ENCODE measurements at regions of chr5 and their contacts with region 1.

Region 1: GRCh38 chr5:157148734-157149615 is 6.3 kb upstream of the MED7 start:
- DNase-seq: peak; percentile 52 to 93 (median 76)
- ATAC-seq: peak; percentile 70 to 85 (median 78)
- H3K4me3 ChIP-seq: no peak overlapping the region
- H3K4me3 Mint-ChIP-seq: peak overlapping the region in 1 of 3 donors; percentile 29
- H3K27ac ChIP-seq: no peak overlapping the region
- H3K27ac Mint-ChIP-seq: peak overlapping the region; percentile 81 to 90
- H3K4me1 ChIP-seq: peaks cover 12 to 25% of the 10 kb centered on the region in 2 experiments
- H3K4me1 Mint-ChIP-seq: peaks cover 41 to 47% (median 46%) of the 10 kb centered on the region in 3 donors
- H3K27me3 ChIP-seq: no peaks in the 10 kb centered on the region
- H3K27me3 Mint-ChIP-seq: no peaks in the 10 kb centered on the region

Region 2: DNA sequence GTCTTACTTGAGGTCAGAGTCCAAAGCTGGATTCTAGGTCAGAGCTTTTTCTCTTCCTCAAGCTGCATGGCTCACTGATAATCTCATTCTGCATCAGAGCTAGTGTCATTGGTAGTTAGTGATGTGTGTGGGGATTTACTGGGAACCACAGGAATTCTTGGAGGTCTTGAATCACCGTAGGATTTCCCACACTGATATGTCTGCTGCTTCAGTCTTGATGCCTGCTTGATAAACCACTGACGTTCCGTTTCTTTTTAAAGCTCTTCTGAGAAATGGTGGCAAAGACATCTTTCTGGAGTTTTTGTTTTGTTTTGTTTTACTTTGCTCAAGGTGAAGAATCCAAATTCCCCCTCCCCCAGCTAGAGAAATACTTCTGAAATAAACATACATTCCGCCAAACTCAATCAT is 18.2 kb after region 1 on chr5:
- CTCF ChIA-PET with region 1: interaction called, 6 to 15 read pairs
- POLR2A ChIA-PET with region 1: interaction called, 3 to 4 read pairs
- DNase-seq: no peak
- ATAC-seq: peak; percentile 31 to 58 (median 44)
- H3K4me3 ChIP-seq: no peak overlapping the region
- H3K4me3 Mint-ChIP-seq: peak overlapping the region; percentile 40 to 70 (median 42)
- H3K27ac ChIP-seq: peak overlapping the region; percentile 56
- H3K27ac Mint-ChIP-seq: peak overlapping the region; percentile 92
- H3K4me1 ChIP-seq: peaks cover 17 to 30% of the 10 kb centered on the region in 2 experiments
- H3K4me1 Mint-ChIP-seq: peaks cover 55 to 75% (median 70%) of the 10 kb centered on the region in 3 donors
- H3K27me3 ChIP-seq: no peaks in the 10 kb centered on the region
- H3K27me3 Mint-ChIP-seq: no peaks in the 10 kb centered on the region

Region 3: DNA sequence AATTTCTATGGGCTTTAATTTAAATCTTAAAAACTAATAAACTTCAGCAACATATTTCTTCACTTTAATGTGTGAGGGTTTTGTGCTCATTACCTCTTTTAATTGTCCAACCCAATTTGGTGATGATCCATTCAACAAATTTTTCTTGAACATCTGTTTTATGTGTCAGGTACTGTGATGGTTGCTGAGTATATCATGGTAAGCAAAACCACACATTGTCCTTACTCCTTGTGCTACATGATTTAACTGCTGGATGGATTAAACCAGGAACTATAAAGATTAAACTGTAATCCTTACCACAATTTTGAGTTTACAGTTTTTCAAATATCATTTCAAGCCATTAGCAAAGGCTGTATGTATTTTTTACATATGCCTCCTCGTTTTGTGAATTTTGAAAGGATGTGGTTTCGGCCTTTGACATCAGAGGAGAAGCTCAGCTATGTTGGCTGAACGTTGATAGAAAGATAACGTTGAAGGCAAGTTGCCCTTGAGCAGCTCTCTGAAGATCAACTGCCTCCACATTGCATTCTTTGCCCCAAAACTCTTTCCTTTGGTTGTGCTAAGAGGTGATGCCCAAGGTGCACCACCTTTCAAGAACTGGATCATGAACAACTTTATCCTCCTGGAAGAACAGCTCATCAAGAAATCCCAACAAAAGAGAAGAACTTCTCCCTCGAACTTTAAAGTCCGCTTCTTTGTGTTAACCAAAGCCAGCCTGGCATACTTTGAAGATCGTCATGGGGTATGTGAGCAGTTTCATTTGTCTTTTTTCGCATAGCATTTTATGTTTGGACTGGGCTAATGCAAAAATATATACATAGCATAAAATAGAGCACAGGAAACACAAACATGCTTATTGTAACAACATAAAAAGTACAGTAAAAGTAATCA is 31.6 kb after region 1 on chr5 and contains the start of gene ITK:
- CTCF ChIA-PET with region 1: interaction called, 3 to 12 read pairs
- POLR2A ChIA-PET with region 1: interaction called in 1 of 2 experiments, 5 read pairs
- DNase-seq: peak in 29 of 35 experiments; percentile 11 to 86 (median 51)
- ATAC-seq: peak; percentile 86 to 89 (median 86)
- H3K4me3 ChIP-seq: peak within 1 kb of the TSS; percentile 79 to 91
- H3K4me3 Mint-ChIP-seq: peak within 1 kb of the TSS; percentile 81 to 100 (median 99)
- H3K27ac ChIP-seq: peak within 1 kb of the TSS; percentile 88
- H3K27ac Mint-ChIP-seq: peak within 1 kb of the TSS; percentile 99 to 100
- H3K4me1 ChIP-seq: peaks cover 30 to 37% of the 10 kb centered on the region in 2 experiments
- H3K4me1 Mint-ChIP-seq: peaks cover 48 to 56% (median 56%) of the 10 kb centered on the region in 3 donors
- H3K27me3 ChIP-seq: no peaks in the 10 kb centered on the region
- H3K27me3 Mint-ChIP-seq: no peaks in the 10 kb centered on the region
- total RNA-seq, gene ITK: 286 to 466 (median 338) TPM

Region 4: GRCh38 chr5:157253547-157253946 is 104.6 kb after region 1 on chr5:
- CTCF ChIA-PET with region 1: interaction called in 1 of 2 experiments, 29 read pairs
- POLR2A ChIA-PET with region 1: interaction called in 1 of 2 experiments, 3 read pairs
- DNase-seq: peak in 1 of 35 experiments; percentile 61
- ATAC-seq: no peak
- H3K4me3 ChIP-seq: no peak overlapping the region
- H3K4me3 Mint-ChIP-seq: peak overlapping the region; percentile 18 to 64 (median 53)
- H3K27ac ChIP-seq: peak overlapping the region; percentile 80
- H3K27ac Mint-ChIP-seq: peak overlapping the region; percentile 94 to 95
- H3K4me1 ChIP-seq: peaks cover 71 to 86% of the 10 kb centered on the region in 2 experiments
- H3K4me1 Mint-ChIP-seq: peaks cover 96 to 98% (median 97%) of the 10 kb centered on the region in 3 donors
- H3K27me3 ChIP-seq: no peaks in the 10 kb centered on the region
- H3K27me3 Mint-ChIP-seq: no peaks in the 10 kb centered on the region

Region 5: DNA sequence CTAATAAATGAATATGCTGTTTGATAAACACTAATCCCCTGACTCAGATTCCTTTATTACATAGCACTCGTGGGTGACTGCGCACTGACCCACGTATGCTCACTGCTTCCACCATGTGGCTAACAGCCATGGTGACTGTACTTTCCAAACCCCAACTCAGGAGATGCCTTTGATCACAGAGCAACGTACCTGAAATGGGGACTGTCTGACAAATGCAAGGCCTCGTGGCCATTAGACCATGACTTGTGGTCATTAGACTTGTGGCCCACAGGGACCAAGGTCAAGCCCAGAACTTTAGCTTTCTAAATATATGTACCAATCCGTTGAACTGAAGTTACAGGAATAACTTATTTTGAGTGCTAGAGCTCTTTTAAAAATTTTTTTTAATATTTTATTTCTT is 163.5 kb after region 1 on chr5:
- CTCF ChIA-PET with region 1: interaction called, 11 to 19 read pairs
- POLR2A ChIA-PET with region 1: no interaction called
- DNase-seq: peak in 34 of 35 experiments; percentile 32 to 86 (median 54)
- ATAC-seq: peak; percentile 83 to 91 (median 89)
- H3K4me3 ChIP-seq: no peak overlapping the region
- H3K4me3 Mint-ChIP-seq: no peak overlapping the region
- H3K27ac ChIP-seq: peak overlapping the region; percentile 35
- H3K27ac Mint-ChIP-seq: peak overlapping the region; percentile 76 to 93
- H3K4me1 ChIP-seq: peaks cover 15 to 47% of the 10 kb centered on the region in 2 experiments
- H3K4me1 Mint-ChIP-seq: peaks cover 41 to 48% (median 44%) of the 10 kb centered on the region in 3 donors
- H3K27me3 ChIP-seq: no peaks in the 10 kb centered on the region
- H3K27me3 Mint-ChIP-seq: no peaks in the 10 kb centered on the region

Measured in T-cell (primary cell).